AG04450 (cell line): ENCODE measurements at regions of chr19 and their contacts with region 1.

Region 1: DNA sequence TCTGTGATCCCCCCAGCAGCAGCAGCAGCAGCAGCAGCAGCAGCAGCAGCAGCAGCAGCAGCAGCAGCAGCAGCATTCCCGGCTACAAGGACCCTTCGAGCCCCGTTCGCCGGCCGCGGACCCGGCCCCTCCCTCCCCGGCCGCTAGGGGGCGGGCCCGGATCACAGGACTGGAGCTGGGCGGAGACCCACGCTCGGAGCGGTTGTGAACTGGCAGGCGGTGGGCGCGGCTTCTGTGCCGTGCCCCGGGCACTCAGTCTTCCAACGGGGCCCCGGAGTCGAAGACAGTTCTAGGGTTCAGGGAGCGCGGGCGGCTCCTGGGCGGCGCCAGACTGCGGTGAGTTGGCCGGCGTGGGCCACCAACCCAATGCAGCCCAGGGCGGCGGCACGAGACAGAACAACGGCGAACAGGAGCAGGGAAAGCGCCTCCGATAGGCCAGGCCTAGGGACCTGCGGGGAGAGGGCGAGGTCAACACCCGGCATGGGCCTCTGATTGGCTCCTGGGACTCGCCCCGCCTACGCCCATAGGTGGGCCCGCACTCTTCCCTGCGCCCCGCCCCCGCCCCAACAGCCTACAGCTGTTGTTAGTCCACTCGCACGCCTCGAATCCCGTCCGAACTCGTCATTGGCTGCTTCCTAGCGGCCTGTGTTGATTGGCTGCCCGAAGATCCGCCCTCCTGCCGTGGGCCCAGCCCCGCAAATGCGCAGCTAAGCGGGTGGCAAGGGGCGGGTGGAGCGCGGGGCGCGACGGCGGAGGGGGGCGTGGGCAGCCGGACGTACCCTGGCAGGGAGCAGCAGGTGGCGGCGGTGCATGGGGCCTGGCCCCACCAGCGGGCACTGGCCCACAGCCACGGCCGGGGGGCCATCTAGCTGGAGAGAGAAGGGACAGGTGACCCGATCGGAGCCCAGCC is 1.4 kb upstream of the SIX5 start:
- DNase-seq: peak; percentile 97
- H3K4me3 ChIP-seq: peak overlapping the region; percentile 67
- H3K27ac ChIP-seq: peak overlapping the region; percentile 93
- H3K27me3 ChIP-seq: no peaks in the 10 kb centered on the region
- CTCF ChIP-seq: peak; percentile 79

Region 2: GRCh38 chr19:45091031-45091923 is 679.2 kb before region 1 on chr19:
- CTCF ChIA-PET with region 1: no interaction called
- POLR2A ChIA-PET with region 1: no interaction called
- DNase-seq: peak; percentile 98
- H3K4me3 ChIP-seq: peak overlapping the region; percentile 92
- H3K27ac ChIP-seq: peak overlapping the region; percentile 73
- H3K27me3 ChIP-seq: no peaks in the 10 kb centered on the region
- CTCF ChIP-seq: no peak

Region 3: GRCh38 chr19:45692187-45693105 is 78.0 kb before region 1 on chr19 and contains the start of gene QPCTL:
- CTCF ChIA-PET with region 1: interaction called, 6 read pairs
- POLR2A ChIA-PET with region 1: interaction called, 35 read pairs
- DNase-seq: peak; percentile 99
- H3K4me3 ChIP-seq: peak within 1 kb of the TSS; percentile 96
- H3K27ac ChIP-seq: peak within 1 kb of the TSS; percentile 89
- H3K27me3 ChIP-seq: no peaks in the 10 kb centered on the region
- CTCF ChIP-seq: no peak
- polyA plus RNA-seq, gene QPCTL: 6.7 and 9.5 TPM in 2 replicates

Region 4: GRCh38 chr19:45730389-45731288 is 39.8 kb before region 1 on chr19 and contains the start of gene FBXO46:
- CTCF ChIA-PET with region 1: interaction called, 8 read pairs
- POLR2A ChIA-PET with region 1: interaction called, 10 read pairs
- DNase-seq: peak; percentile 95
- H3K4me3 ChIP-seq: peak within 1 kb of the TSS; percentile 72
- H3K27ac ChIP-seq: peak within 1 kb of the TSS; percentile 21
- H3K27me3 ChIP-seq: no peaks in the 10 kb centered on the region
- CTCF ChIP-seq: peak; percentile 25; the same call in 1 of the 2 replicates
- polyA plus RNA-seq, gene FBXO46: 1.4 and 2.2 TPM in 2 replicates

Region 5: GRCh38 chr19:45782820-45783785 is 12.7 kb after region 1 on chr19:
- CTCF ChIA-PET with region 1: interaction called, 9 read pairs
- POLR2A ChIA-PET with region 1: interaction called, 41 read pairs
- DNase-seq: no peak
- H3K4me3 ChIP-seq: peak overlapping the region; percentile 62
- H3K27ac ChIP-seq: peak overlapping the region; percentile 94
- H3K27me3 ChIP-seq: no peaks in the 10 kb centered on the region
- CTCF ChIP-seq: 0 out of 2 replicates have a peak, but pooled peaks have one; percentile 11

Region 6: DNA sequence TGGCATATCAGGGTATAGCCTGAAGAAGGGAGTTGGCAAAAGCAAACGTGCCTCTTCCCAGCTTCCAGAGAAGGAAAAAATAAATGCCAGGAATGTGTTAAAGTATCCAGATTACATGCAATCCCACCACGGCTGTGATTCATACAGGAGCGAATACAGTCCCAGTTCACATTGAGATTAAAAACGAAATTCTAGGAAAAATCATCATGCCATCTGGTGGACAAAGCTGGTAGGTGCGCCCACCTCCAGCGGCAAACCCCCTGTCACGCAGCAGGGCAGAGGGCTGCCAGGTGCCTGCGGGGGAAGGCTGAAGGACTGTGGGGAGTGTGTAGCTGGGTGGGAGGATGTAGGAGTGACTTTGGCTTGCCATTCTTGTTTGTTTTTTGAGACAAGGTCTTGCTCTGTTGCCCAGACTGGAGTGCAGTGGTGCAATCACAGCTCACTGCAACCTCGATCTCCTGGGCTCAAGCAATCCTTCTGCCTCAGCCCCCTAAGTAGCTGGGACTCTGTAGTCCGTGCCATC is 28.6 kb after region 1 on chr19:
- CTCF ChIA-PET with region 1: interaction called, 45 read pairs
- POLR2A ChIA-PET with region 1: interaction called, 50 read pairs
- DNase-seq: peak; percentile 61
- H3K4me3 ChIP-seq: no peak overlapping the region
- H3K27ac ChIP-seq: no peak overlapping the region
- H3K27me3 ChIP-seq: no peaks in the 10 kb centered on the region
- CTCF ChIP-seq: peak; percentile 79